ENCODE measurements at regions of chr4 and their contacts with region 1.

Region 1: DNA sequence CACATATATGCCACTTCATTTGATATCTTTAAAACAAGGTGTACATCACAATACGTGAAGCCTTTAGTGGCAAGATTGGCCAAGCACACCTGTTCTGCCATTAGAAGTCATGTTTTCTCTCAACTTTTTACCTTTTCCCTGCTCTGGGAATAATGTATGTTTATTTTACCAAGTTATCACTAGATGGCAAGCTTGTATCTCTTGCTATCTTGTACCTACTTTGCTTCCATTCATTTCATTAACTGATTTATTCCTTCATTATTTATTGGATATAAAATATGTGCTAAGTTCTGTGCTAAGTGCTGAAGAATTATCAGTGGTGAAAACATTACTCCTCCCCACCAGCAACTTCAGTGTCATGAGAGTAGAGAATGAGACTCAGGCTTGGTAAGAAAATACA is 245.5 kb downstream of the ANK2 start:
- DNase-seq: no peak
- ATAC-seq: no peak

Region 2: GRCh38 chr4:113122066-113122465 is 172.8 kb before region 1 on chr4:
- intact Hi-C with region 1: no loop called
- DNase-seq: no peak
- ATAC-seq: no peak

Region 3: DNA sequence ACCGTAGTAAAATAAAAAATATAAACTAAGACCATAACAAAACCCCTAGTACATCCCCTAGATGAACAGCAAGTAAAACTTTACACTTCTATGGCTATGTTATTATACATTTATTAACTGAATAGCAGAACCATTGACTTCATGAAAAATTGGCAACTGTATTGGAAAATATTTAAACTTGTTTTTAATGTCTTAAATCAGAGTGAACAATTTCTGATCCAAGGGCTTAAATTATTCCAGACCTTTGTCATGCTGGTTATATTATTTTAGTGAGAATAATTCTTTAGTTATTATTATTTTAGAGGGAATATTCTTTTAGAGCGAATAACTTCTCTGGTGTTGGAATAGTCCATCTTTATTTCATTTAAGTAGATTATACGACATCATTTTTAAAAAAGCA is 19.5 kb after region 1 on chr4:
- intact Hi-C with region 1: loop called (anchors 1 kb)
- DNase-seq: no peak
- ATAC-seq: no peak

Region 4: DNA sequence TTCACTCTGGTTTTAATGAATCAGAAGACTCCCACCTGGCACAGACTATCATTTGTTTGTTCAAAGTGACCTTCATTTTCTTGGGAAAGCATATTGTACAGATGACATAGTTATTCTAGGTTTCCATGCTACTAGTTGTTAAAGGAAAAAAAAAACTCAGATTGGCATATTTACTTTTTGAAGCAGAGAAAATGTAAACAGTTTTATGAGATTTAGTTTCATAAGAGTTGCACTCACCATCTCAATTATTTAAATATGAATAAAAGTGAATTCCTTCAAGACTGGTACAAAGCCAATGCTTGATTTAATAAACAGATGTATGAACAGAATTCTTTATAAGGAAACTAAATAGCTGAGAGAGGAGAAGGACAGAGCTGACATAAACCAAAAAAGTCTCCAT is 1023.4 kb after region 1 on chr4:
- intact Hi-C with region 1: no loop called
- DNase-seq: no peak
- ATAC-seq: no peak

Measured in Right ventricle myocardium inferior (tissue), 1 donor.